Activated CD4-positive, alpha-beta T cell treated with anti-CD3 and anti-CD28 coated beads for 36 hours (primary cell): ENCODE measurements at regions of chr1 and their contacts with region 1.

Region 1: DNA sequence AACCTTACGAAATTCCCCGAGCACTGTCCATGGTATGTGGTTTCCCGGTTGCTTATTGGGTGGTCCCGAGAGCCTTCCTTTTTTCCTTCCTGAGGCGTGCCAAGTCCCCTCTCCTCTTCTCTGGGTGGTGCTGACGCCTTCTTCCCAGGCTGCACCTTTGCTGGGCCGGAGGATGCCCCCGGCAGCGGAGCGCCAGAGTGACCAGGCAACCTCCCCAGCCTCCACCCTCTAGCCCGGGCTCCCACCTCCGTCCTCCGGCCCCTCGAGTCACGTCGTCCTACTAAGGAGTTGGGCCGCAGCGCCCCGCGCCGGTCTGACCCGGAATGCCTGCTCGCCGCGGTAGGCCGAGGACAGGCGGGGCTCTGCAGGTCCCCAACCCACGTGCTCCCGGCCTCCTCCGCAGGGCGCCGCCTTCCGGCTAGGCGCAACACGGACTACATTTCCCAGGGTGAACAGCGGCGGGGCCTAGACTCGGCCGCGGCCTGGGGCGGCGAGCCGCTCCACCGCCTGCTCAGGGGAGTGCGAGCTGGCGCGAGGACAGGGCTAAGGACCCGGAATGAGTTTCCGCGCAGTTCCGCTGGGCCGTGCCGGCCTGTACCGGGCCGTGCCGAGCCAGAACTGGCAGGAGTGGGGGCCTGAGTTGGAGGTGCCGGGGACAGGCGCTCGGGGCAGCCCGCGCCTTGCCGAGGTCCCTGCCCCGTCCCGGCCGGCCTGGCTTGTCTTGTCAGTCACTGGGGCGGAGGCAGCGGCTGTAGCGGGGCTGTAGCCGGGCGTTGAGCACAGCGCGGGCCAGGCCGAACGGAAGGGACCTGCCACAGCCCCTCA is at the start of gene IPO13:
- DNase-seq: peak; percentile 98
- ATAC-seq: peak; percentile 96
- H3K4me3 Mint-ChIP-seq: peak within 1 kb of the TSS; percentile 94
- H3K27ac Mint-ChIP-seq: peak within 1 kb of the TSS; percentile 96
- H3K4me1 Mint-ChIP-seq: peaks cover 37% of the 10 kb centered on the region
- H3K27me3 Mint-ChIP-seq: no peaks in the 10 kb centered on the region
- total RNA-seq, gene IPO13: 10.7 to 12.5 TPM

Region 2: GRCh38 chr1:42924082-42924850 is 1022.2 kb before region 1 on chr1:
- CTCF ChIA-PET with region 1: no interaction called
- POLR2A ChIA-PET with region 1: no interaction called
- intact Hi-C with region 1: loop called in 1 of 2 experiments (anchors 1 kb)
- DNase-seq: peak; percentile 95
- ATAC-seq: peak; percentile 87
- H3K4me3 Mint-ChIP-seq: peak overlapping the region; percentile 87
- H3K27ac Mint-ChIP-seq: peak overlapping the region; percentile 95
- H3K4me1 Mint-ChIP-seq: peaks cover 32% of the 10 kb centered on the region
- H3K27me3 Mint-ChIP-seq: no peaks in the 10 kb centered on the region

Region 3: DNA sequence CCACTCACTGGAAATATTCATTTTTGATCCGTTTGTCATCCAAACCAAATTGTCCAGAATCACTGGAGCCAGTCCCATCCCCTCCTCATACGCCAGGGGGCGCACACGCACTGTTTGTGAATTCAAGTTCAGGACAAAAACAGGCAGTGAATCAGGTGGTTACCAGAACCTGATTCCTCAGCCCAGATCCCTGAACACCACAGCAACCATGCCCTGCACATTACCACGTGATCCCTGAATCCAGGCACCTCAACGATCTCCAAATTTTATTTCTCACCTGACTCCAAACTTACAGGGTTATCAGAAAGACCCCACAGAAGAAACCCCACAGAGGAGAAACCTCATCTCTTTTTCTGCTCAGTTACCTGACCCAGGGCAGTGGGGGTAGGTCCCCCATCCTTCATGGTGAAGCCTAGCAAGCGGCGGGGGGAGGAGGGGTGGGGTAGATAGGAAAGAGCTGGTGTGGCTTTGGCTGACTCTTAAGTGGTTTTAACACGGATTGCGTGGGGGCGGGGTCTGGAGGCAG is 417.2 kb before region 1 on chr1:
- CTCF ChIA-PET with region 1: no interaction called
- POLR2A ChIA-PET with region 1: no interaction called
- intact Hi-C with region 1: loop called in 1 of 2 experiments (anchors 1 kb)
- DNase-seq: peak; percentile 90
- ATAC-seq: peak; percentile 75
- H3K4me3 Mint-ChIP-seq: no peak overlapping the region
- H3K27ac Mint-ChIP-seq: no peak overlapping the region
- H3K4me1 Mint-ChIP-seq: peaks cover 20% of the 10 kb centered on the region
- H3K27me3 Mint-ChIP-seq: peaks cover 37% of the 10 kb centered on the region

Region 4: GRCh38 chr1:43864111-43865045 is 82.1 kb before region 1 on chr1:
- CTCF ChIA-PET with region 1: no interaction called
- POLR2A ChIA-PET with region 1: no interaction called
- intact Hi-C with region 1: loop called in 1 of 2 experiments (anchors 1 kb)
- DNase-seq: peak; percentile 25
- ATAC-seq: peak; percentile 42
- H3K4me3 Mint-ChIP-seq: no peak overlapping the region
- H3K27ac Mint-ChIP-seq: peak overlapping the region; percentile 53
- H3K4me1 Mint-ChIP-seq: peaks cover 38% of the 10 kb centered on the region
- H3K27me3 Mint-ChIP-seq: no peaks in the 10 kb centered on the region

Region 5: GRCh38 chr1:43991476-43992231 is 45.2 kb after region 1 on chr1 and contains the start of gene CCDC24:
- CTCF ChIA-PET with region 1: no interaction called
- POLR2A ChIA-PET with region 1: no interaction called
- intact Hi-C with region 1: loop called in 1 of 2 experiments (anchors 1 kb)
- DNase-seq: peak; percentile 82
- ATAC-seq: peak; percentile 82
- H3K4me3 Mint-ChIP-seq: peak within 1 kb of the TSS; percentile 79
- H3K27ac Mint-ChIP-seq: peak within 1 kb of the TSS; percentile 65
- H3K4me1 Mint-ChIP-seq: peaks cover 8% of the 10 kb centered on the region
- H3K27me3 Mint-ChIP-seq: no peaks in the 10 kb centered on the region
- total RNA-seq, gene CCDC24: 1.2 to 2.0 TPM

Region 6: DNA sequence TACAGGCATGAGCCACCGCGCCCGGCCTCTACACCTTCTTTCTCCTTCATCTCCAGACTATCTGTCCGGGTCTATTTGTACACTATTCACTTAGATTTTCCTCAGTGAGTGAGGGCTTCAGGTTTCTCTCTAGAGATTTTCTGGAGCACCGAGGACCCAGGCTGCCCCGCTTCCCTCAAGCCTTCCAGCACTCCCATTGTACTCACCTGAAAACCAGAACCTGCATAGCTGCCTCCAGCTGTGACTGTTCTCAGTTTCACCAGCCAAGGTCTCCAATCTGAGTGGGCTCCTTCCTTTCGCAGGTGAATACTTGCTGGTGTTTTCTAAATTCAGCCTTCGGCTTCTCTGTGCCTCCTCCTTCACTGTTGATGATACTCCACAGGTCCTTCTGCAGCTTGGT is 253.9 kb after region 1 on chr1:
- CTCF ChIA-PET with region 1: no interaction called
- POLR2A ChIA-PET with region 1: no interaction called
- intact Hi-C with region 1: no loop called
- DNase-seq: no peak
- ATAC-seq: no peak
- H3K4me3 Mint-ChIP-seq: no peak overlapping the region
- H3K27ac Mint-ChIP-seq: no peak overlapping the region
- H3K4me1 Mint-ChIP-seq: no peaks in the 10 kb centered on the region
- H3K27me3 Mint-ChIP-seq: no peaks in the 10 kb centered on the region

Region 7: GRCh38 chr1:44213222-44214112 is 267.0 kb after region 1 on chr1 and contains the start of gene DMAP1:
- CTCF ChIA-PET with region 1: no interaction called
- POLR2A ChIA-PET with region 1: no interaction called
- intact Hi-C with region 1: loop called in 1 of 2 experiments (anchors 1 kb)
- DNase-seq: peak; percentile 91
- ATAC-seq: peak; percentile 92
- H3K4me3 Mint-ChIP-seq: peak within 1 kb of the TSS; percentile 94
- H3K27ac Mint-ChIP-seq: peak within 1 kb of the TSS; percentile 93
- H3K4me1 Mint-ChIP-seq: peaks cover 33% of the 10 kb centered on the region
- H3K27me3 Mint-ChIP-seq: no peaks in the 10 kb centered on the region
- total RNA-seq, gene DMAP1: 30.2 to 34.8 TPM